Aorta (tissue), 5 donors: ENCODE measurements at regions of chr9 and their contacts with region 1.

Region 1: GRCh38 chr9:121604242-121604641 is 47.2 kb upstream of the DAB2IP start:
- DNase-seq: peak in 1 of 2 donors; percentile 67
- ATAC-seq: no peak
- H3K4me3 ChIP-seq: no peak overlapping the region
- H3K27ac ChIP-seq: no peak overlapping the region
- H3K4me1 ChIP-seq: peaks cover 0 to 2% of the 10 kb centered on the region in 2 donors
- H3K27me3 ChIP-seq: no peaks in the 10 kb centered on the region

Region 2: DNA sequence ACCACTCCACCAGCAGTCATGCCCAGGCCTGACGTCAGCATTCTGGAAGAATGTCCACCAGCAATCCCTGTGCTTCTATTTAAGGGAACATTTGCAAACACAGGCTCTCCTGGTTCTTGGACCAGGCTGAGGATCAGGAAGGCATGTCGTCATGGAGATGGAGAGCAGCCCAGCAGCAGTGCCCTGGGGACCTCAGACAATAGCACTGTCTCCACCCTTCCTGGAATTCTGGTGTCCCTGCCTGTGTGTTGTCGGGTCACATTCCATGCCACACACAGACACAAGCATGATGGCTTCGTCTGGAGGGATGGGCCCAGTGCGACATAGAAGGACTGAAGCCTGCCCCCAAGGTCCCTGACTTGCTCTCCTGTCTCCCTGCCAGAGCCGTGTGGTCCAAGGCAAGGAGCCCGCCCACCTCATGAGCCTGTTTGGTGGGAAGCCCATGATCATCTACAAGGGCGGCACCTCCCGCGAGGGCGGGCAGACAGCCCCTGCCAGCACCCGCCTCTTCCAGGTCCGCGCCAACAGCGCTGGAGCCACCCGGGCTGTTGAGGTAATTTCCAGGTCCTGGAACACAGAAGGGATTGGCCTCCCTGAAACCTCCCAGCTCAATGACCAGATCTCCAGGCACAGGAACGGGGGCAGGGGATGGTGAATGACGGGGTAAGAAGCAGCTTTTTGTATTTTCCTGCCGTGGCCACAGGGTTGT is 278.0 kb before region 1 on chr9:
- intact Hi-C with region 1: no loop called
- DNase-seq: peak; percentile 96 to 98
- ATAC-seq: peak; percentile 91
- H3K4me3 ChIP-seq: no peak overlapping the region
- H3K27ac ChIP-seq: peak overlapping the region; percentile 67 to 95
- H3K4me1 ChIP-seq: no peaks in the 10 kb centered on the region
- H3K27me3 ChIP-seq: no peaks in the 10 kb centered on the region

Region 3: DNA sequence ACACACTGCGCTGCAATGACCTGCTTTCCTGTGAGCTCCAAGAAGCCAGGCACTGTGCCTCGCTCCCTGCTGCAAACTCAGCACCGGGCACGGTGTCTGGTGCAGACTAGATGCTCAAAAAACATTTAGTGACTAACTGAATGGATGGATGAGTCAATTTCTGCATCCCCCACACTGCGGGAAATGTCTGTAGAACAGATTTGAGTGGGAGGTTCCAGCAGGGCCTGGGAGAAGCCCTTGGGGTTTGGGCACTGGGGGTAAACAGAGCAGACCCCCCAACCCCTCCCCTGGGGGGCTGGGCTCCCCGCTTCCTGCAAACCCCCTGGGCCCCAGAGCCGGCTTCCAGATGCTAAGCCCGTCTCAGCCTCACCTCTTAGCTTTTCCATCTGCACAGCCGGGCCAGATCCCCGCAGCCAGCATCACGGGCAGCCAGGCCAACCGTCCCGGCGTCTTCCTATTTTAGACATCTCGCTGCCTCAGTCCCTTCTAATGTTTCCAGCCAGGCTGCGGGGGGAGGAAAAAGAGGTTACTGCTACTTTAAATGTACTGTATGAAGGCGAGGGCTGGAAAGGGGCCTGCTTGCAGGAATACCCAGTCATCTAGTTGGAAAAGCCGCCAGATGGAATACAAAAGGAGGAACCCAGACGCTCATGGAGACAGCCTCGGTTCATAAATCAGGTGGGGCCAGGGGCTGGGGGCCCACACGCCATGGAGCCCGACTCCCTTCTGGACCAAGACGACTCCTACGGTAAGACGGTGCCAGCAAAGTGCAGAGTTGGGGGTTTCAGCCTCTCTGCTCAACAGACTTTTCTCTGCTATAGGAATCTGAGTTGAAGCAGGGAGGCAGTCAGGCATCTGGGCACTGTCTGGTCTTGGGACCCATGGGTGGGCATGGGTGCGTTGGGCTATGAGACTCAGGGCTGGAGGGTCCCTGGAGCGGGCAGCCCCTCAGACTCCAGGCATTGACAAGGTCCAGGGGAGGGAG is 37.5 kb before region 1 on chr9:
- intact Hi-C with region 1: loop called in 1 of 2 experiments (anchors 5 kb)
- DNase-seq: peak; percentile 73 to 88
- ATAC-seq: peak; percentile 54
- H3K4me3 ChIP-seq: peak overlapping the region; percentile 44 to 47
- H3K27ac ChIP-seq: peak overlapping the region in 1 of 2 donors; percentile 87
- H3K4me1 ChIP-seq: peaks cover 0 to 7% of the 10 kb centered on the region in 2 donors
- H3K27me3 ChIP-seq: no peaks in the 10 kb centered on the region

Region 4: DNA sequence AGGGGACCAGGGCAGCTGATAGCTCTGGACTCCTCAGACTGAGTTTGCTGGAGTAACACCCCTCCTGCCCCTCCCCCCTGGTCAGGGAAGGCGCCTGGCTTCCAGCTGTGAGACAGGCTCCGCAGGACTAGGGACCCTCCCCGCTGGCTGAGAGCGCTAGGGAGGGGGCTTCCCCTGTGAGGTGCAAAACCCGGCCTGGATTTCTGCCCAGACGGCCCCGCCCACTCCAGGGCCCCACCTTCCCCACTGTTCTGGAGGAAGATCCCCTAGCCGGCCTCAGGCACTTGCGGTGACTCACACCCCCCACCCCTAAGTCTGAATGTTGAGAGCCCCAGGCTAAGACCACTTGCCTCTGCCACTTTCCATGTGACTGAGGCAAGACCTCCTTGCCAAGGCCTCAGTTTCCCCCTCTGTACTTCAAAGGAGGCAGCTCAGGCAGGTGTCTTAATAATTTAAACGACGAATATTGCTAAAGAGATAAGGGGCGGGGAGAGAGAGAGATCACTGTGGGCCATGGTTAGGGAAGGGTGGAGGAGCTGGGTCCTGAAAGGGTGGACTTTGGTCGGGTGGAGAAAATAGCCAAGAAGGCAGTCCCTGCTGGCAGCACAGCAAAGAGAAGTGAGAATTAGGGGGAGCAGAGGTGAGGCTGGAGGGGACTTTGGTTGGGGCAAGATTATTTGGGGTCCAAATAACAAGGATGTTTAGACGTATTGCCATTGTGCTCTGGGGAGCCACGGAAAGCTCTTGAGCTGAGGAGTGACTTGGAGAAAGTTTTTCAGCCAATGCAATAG is 46.2 kb after region 1 on chr9:
- intact Hi-C with region 1: loop called in 1 of 2 experiments (anchors 5 kb)
- DNase-seq: peak; percentile 58 to 85
- ATAC-seq: peak; percentile 27
- H3K4me3 ChIP-seq: no peak overlapping the region
- H3K27ac ChIP-seq: no peak overlapping the region
- H3K4me1 ChIP-seq: no peaks in the 10 kb centered on the region
- H3K27me3 ChIP-seq: no peaks in the 10 kb centered on the region